T-cell (primary cell): ENCODE measurements at regions of chr18 and their contacts with region 1.

Region 1: GRCh38 chr18:34787931-34788532 is 77.9 kb downstream of the DTNA start:
- DNase-seq: peak in 14 of 35 experiments; percentile 1 to 68 (median 6)
- ATAC-seq: peak; percentile 44 to 55 (median 54)
- H3K4me3 ChIP-seq: no peak overlapping the region
- H3K4me3 Mint-ChIP-seq: no peak overlapping the region
- H3K27ac ChIP-seq: no peak overlapping the region
- H3K27ac Mint-ChIP-seq: no peak overlapping the region
- H3K4me1 ChIP-seq: no peaks in the 10 kb centered on the region
- H3K4me1 Mint-ChIP-seq: peaks cover 4 to 6% (median 4%) of the 10 kb centered on the region in 3 donors
- H3K27me3 ChIP-seq: no peaks in the 10 kb centered on the region
- H3K27me3 Mint-ChIP-seq: peaks cover 11 to 19% of the 10 kb centered on the region in 2 donors

Region 2: DNA sequence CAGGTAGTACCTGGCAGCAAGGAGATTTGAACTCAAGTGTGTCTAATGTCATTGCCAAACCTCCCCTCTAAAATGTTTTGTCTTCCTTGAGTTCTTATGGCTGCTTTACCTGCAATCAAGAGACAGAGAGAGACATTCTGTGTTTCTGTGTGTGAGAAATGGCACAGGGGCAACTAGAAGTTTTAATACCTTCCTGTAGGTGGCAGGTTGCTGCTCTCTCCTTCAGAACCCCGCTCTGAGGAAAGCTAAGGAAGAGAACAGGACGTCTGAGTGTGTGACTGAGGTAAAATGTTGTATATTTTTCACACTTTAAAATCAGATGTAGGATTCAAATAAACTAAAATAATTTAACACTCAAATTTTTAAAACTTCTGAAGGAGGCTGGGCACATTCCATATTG is 58.8 kb before region 1 on chr18:
- CTCF ChIA-PET with region 1: no interaction called
- POLR2A ChIA-PET with region 1: no interaction called
- DNase-seq: peak in 1 of 35 experiments; percentile 1
- ATAC-seq: no peak
- H3K4me3 ChIP-seq: no peak overlapping the region
- H3K4me3 Mint-ChIP-seq: no peak overlapping the region
- H3K27ac ChIP-seq: no peak overlapping the region
- H3K27ac Mint-ChIP-seq: no peak overlapping the region
- H3K4me1 ChIP-seq: no peaks in the 10 kb centered on the region
- H3K4me1 Mint-ChIP-seq: peaks cover 0 to 5% (median 4%) of the 10 kb centered on the region in 3 donors
- H3K27me3 ChIP-seq: peaks cover 0 to 6% of the 10 kb centered on the region in 2 experiments
- H3K27me3 Mint-ChIP-seq: peaks cover 0 to 4% of the 10 kb centered on the region in 2 donors

Region 3: GRCh38 chr18:34809451-34810072 is 21.5 kb after region 1 on chr18:
- CTCF ChIA-PET with region 1: interaction called, 7 to 11 read pairs
- POLR2A ChIA-PET with region 1: no interaction called
- DNase-seq: no peak
- ATAC-seq: no peak
- H3K4me3 ChIP-seq: no peak overlapping the region
- H3K4me3 Mint-ChIP-seq: no peak overlapping the region
- H3K27ac ChIP-seq: no peak overlapping the region
- H3K27ac Mint-ChIP-seq: no peak overlapping the region
- H3K4me1 ChIP-seq: no peaks in the 10 kb centered on the region
- H3K4me1 Mint-ChIP-seq: no peaks in the 10 kb centered on the region
- H3K27me3 ChIP-seq: no peaks in the 10 kb centered on the region
- H3K27me3 Mint-ChIP-seq: no peaks in the 10 kb centered on the region